ENCODE measurements at regions of chr1 and their contacts with region 1.

Region 1: DNA sequence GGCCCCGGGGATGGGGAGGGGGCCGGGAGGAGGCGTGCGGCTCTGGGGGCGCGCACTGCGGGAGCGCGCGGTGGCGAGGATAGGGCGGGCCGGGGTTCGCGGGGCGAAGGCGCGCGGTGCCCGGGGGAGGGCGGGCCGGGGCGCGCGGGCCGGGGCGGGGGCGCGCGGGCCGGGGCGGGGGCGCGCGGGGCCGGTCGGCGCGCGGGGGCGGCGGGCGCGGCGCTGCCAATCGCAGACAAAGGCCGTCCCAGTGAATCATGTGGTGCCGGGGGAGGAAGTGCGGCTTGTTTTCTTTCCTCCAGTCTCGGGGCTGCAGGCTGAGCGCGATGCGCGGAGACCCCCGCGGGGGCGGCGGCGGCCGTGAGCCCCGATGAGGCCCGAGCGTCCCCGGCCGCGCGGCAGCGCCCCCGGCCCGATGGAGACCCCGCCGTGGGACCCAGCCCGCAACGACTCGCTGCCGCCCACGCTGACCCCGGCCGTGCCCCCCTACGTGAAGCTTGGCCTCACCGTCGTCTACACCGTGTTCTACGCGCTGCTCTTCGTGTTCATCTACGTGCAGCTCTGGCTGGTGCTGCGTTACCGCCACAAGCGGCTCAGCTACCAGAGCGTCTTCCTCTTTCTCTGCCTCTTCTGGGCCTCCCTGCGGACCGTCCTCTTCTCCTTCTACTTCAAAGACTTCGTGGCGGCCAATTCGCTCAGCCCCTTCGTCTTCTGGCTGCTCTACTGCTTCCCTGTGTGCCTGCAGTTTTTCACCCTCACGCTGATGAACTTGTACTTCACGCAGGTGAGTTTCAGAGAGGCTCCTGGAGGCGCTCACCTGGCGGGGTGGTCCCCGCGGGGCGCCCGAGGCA is at the start of gene GPR137B:
- DNase-seq: peak; percentile 74
- H3K4me3 Mint-ChIP-seq: peak within 1 kb of the TSS; percentile 87
- H3K27ac Mint-ChIP-seq: no peak within 1 kb of the TSS
- H3K4me1 Mint-ChIP-seq: peaks cover 9% of the 10 kb centered on the region
- H3K27me3 Mint-ChIP-seq: peaks cover 37% of the 10 kb centered on the region
- total RNA-seq, gene GPR137B: 1.6 to 2.4 TPM

Region 2: DNA sequence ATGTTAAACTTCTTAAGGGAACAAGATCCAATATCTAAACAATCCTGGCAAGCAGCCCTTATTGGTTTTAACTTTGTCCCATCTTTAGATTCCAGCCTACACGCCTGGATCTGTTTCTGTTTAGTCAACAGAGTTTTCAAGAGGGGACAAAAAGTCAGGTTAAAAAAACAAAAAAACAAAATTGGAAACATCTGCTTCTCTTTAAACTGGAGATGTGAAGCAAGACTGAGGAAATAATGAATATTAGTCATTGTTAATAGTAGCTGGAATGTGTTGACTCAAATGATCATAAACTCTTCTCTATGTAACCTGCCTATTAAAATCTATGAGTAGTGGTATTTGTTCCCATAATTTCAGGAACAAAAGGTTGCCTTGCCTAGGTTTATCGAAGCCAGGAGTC is 132.6 kb before region 1 on chr1:
- CTCF ChIA-PET with region 1: no interaction called
- intact Hi-C with region 1: no loop called
- DNase-seq: no peak
- H3K4me3 Mint-ChIP-seq: no peak overlapping the region
- H3K27ac Mint-ChIP-seq: no peak overlapping the region
- H3K4me1 Mint-ChIP-seq: no peaks in the 10 kb centered on the region
- H3K27me3 Mint-ChIP-seq: no peaks in the 10 kb centered on the region

Region 3: GRCh38 chr1:236120721-236121153 is 21.7 kb before region 1 on chr1:
- CTCF ChIA-PET with region 1: interaction called, 3 read pairs
- intact Hi-C with region 1: loop called (anchors 1 kb)
- DNase-seq: peak; percentile 33
- H3K4me3 Mint-ChIP-seq: no peak overlapping the region
- H3K27ac Mint-ChIP-seq: no peak overlapping the region
- H3K4me1 Mint-ChIP-seq: peaks cover 28% of the 10 kb centered on the region
- H3K27me3 Mint-ChIP-seq: no peaks in the 10 kb centered on the region

Region 4: GRCh38 chr1:236206548-236206947 is 64.1 kb after region 1 on chr1:
- CTCF ChIA-PET with region 1: no interaction called
- intact Hi-C with region 1: no loop called
- DNase-seq: no peak
- H3K4me3 Mint-ChIP-seq: no peak overlapping the region
- H3K27ac Mint-ChIP-seq: no peak overlapping the region
- H3K4me1 Mint-ChIP-seq: no peaks in the 10 kb centered on the region
- H3K27me3 Mint-ChIP-seq: no peaks in the 10 kb centered on the region

Region 5: DNA sequence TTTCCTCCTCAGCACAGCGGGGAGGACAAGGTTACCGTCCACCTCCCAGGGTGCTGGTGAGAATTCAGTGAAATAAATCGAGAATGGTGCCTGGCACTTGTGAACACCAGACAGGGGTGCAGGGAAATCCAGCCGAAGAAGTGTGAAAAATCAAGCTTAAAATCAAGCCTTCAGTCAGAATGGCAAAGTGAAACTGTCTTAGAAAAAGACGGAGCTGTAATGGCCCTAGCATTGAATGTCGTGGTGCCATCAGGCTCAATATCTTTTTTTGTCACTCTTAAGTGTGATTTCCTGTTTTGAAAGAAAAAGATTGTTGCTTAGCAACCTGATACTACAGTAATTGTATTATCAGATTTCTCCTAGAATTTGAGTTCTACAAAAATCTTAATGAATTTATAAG is 273.7 kb after region 1 on chr1:
- CTCF ChIA-PET with region 1: no interaction called
- intact Hi-C with region 1: loop called (anchors 1 kb)
- DNase-seq: no peak
- H3K4me3 Mint-ChIP-seq: no peak overlapping the region
- H3K27ac Mint-ChIP-seq: peak overlapping the region; percentile 22
- H3K4me1 Mint-ChIP-seq: peaks cover 7% of the 10 kb centered on the region
- H3K27me3 Mint-ChIP-seq: no peaks in the 10 kb centered on the region